Dorsolateral prefrontal cortex (tissue), 120 donors: ENCODE measurements at regions of chr1 and their contacts with region 1.

Region 1: DNA sequence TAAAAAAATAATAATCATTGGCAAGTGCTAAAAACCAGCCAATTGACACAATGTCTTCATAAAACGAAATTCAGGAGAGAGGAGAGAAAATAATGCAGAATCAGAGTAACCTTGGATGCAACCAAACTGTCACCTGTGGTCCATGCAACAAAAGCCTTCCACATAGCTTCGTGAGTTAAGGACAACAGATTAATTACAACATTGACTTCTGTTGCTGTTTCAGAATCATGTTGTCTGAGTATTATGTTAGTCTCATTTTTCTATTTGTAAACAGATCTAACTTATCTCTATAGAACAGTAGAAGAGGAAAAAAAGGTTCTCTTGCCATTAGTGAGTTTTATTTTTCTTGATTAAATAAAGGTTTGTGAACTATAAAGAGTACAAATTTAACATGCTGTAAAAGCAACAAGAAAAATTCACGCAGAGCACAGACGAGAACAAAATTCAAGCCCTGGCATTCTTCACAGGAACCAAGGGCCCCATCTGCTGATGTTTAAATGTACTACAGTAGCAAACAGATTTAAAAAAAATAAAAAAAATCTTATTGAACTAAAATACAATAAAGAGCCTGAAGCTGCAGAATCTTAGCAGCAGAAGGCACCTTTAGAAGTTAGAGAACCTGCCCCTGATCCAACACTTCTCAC is 381.1 kb upstream of the PKN2 start:
- DNase-seq: peak in 3 of 10 donors; percentile 4 to 52 (median 27)
- H3K4me3 ChIP-seq: peak overlapping the region in 3 of 59 donors; percentile 2 to 8 (median 4)
- H3K27ac ChIP-seq: peak overlapping the region in 34 of 59 donors; percentile 2 to 78 (median 34)
- H3K27me3 ChIP-seq: no peaks in the 10 kb centered on the region
- CTCF ChIP-seq: peak; percentile 41 to 83 (median 67)

Region 2: GRCh38 chr1:87131809-87132283 is 1171.1 kb before region 1 on chr1:
- intact Hi-C with region 1: loop called (anchors 5 to 10 kb)
- DNase-seq: peak; percentile 63 to 91 (median 78)
- H3K4me3 ChIP-seq: peak overlapping the region; percentile 22 to 67 (median 51)
- H3K27ac ChIP-seq: peak overlapping the region in 52 of 59 donors; percentile 11 to 91 (median 72)
- H3K27me3 ChIP-seq: no peaks in the 10 kb centered on the region
- CTCF ChIP-seq: peak; percentile 75 to 99 (median 96)

Region 3: GRCh38 chr1:87600850-87601248 is 702.1 kb before region 1 on chr1:
- intact Hi-C with region 1: no loop called
- DNase-seq: no peak
- H3K4me3 ChIP-seq: no peak overlapping the region
- H3K27ac ChIP-seq: no peak overlapping the region
- H3K27me3 ChIP-seq: no peaks in the 10 kb centered on the region
- CTCF ChIP-seq: no peak

Region 4: GRCh38 chr1:87968197-87968955 is 334.6 kb before region 1 on chr1:
- intact Hi-C with region 1: loop called in 1 of 2 experiments (anchors 5 kb)
- DNase-seq: peak in 5 of 10 donors; percentile 7 to 55 (median 43)
- H3K4me3 ChIP-seq: no peak overlapping the region
- H3K27ac ChIP-seq: peak overlapping the region in 31 of 59 donors; percentile 5 to 70 (median 52)
- H3K27me3 ChIP-seq: no peaks in the 10 kb centered on the region
- CTCF ChIP-seq: no peak

Region 5: DNA sequence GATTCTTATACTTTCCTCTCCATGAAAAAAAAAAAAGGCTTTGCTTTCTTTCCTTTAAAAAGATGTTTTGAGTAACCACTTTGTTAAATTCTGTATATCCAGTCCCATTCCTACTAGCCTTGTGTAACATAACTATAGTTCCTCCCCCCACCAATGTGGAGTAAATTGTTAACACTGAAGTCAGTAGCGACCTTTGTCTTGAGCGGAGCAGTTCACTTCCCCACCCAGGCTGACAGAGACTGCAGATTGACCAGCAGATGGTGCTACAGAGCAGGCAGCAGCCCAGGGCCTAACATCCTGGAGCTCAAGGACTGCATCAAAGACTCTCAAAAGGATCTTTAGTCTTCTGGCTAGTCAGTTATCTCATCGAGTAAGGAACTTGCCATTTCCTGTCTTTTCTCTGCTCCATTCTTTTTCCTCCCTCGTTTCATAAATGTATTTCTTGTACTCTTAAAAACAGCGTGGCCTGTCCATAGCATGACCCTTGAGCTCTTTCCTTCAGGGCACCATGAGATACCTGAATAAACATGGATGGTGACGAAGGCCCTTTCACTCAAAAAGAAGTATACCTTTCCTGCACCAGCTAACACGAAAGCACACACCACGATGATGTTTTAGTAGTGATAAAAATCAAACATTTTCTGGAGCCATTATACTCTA is 122.4 kb before region 1 on chr1:
- intact Hi-C with region 1: loop called (anchors 1 to 5 kb)
- DNase-seq: peak; percentile 36 to 83 (median 72)
- H3K4me3 ChIP-seq: no peak overlapping the region
- H3K27ac ChIP-seq: peak overlapping the region in 24 of 59 donors; percentile 1 to 66 (median 22)
- H3K27me3 ChIP-seq: no peaks in the 10 kb centered on the region
- CTCF ChIP-seq: peak; percentile 32 to 98 (median 91)

Region 6: DNA sequence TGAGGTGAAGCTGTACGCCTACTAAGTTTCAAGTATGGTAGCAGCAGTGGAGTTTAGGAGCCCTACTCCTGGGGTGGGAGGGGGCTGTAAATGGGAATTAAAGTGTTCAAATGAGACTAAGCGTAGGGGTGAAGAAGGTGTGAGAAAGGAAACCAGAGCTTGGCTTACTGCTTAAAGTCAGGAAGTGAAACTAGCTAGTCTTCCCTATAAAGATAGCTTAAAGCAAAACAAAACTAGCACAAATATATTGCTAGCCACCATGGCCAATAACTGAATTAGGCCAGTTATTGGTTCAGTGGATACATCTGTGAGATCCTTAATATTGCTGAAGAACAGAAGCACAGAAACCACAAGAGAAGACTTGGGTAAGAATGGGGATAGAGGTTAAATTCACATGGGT is 111.0 kb before region 1 on chr1:
- intact Hi-C with region 1: no loop called
- DNase-seq: no peak
- H3K4me3 ChIP-seq: no peak overlapping the region
- H3K27ac ChIP-seq: peak overlapping the region in 1 of 59 donors; percentile 28
- H3K27me3 ChIP-seq: no peaks in the 10 kb centered on the region
- CTCF ChIP-seq: no peak

Region 7: GRCh38 chr1:88462488-88463261 is 159.7 kb after region 1 on chr1:
- intact Hi-C with region 1: loop called in 1 of 2 experiments (anchors 10 kb)
- DNase-seq: peak; percentile 12 to 83 (median 72)
- H3K4me3 ChIP-seq: peak overlapping the region; percentile 35 to 74 (median 59)
- H3K27ac ChIP-seq: peak overlapping the region; percentile 25 to 98 (median 95)
- H3K27me3 ChIP-seq: no peaks in the 10 kb centered on the region
- CTCF ChIP-seq: peak in 21 of 56 donors; percentile 5 to 38 (median 18)